Head of caudate nucleus (tissue), 42 donors: ENCODE measurements at regions of chr1 and their contacts with region 1.

Region 1: DNA sequence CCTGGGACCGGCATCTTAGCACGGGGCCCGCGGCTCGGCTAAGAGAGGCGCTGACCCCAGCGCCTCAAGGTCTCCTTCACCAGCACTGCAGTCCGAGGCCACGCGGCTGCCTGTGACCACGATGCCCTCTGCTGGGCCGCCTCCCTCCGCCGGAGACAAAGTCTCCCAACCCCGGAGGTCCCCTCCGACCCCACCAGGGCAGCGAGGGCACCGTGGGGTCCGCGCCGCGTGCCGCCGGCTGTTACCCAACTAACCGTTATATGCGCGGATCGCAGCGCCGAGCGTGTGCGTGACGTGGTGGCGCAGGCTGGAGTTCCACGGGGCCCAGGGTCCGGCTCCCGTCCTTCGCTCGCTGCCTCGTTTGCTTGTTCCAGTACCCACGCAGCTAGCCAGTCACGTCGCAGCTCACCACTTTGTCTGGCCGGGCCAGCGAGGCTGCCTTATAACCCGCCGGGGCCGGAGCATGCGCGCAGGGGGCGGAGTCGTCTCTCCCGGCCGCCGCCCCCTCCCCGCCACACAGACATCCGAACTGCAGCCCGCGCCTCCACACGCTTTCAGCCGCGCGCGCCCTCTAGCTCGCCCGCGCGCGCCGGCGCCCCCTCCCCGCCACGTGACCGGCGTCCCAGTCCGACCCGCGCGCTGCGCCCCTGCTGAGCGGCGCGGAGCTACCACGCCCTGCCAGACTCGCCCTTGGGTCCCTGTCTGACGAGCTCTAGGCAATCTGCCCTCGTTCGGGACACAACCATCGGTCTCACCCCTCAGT is at the start of gene SLC16A1:
- DNase-seq: peak; percentile 89 to 98 (median 96)

Region 2: DNA sequence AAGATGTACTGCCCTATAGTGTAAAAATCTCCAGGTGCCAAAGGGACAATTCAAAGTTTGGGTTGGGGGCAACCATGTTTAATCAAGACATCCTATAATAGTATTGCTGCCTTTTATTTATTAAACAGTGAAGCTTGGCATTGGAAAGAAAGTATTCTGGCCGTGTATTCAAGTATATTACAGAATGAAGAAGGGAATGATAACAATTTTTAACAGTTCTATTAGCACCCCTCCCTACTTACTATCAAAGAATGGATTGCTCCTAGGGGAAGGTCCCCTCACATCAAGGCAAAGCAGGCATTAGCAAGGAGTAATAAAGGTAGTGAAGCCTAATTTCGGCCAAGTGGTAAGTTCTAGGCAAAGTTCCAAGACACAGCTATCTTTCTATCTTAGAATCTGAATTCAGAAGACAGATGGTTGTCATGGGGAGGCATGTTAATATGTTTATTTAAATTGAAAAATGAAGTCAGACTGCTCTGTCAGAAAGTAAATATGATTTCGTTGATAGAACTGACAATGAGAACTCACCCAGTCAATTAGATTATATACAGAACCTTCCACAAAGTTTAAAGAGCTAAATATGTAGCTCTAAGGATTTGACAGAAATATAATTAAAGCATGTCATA is 361.6 kb before region 1 on chr1:
- intact Hi-C with region 1: no loop called
- DNase-seq: no peak

Region 3: DNA sequence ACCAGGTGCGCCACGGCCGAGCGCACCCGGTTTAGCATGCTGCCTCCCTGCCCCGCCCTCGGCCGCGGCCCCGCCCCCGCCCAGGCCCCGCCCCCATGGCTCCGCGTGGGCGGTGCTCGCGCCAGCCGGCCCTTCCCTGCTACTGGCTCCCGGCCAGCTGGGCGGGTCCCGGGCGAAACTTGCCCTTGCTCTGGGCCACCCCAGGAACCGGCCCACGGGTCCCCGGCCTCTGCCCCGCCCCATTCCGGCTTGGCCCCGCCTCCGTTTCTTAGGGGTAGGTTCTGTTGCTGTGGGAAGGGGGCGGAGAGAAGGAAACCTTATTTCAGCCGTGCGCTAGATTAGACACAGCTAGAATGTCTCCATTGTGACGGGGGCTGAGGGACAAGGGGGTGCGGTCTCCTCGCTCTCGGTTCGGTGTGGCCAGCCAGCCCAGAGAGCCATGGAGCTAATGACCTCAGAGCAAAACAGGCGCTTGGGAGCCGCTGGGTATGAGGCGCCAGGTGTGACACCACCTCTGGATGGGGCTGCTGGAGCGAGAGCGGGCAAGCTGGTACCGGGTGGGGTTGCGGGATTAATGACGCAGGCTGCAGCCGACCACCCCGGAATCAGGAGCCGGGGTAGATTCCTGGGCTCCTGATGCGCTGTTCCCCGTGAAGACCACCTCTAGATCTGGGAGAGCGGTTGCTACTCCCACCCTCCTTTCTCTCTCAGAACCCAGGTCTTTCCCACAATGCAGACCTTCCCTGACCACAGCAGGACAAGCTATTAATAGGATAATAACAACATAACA is 240.5 kb before region 1 on chr1 and contains the start of gene PPM1J:
- intact Hi-C with region 1: loop called (anchors 10 kb)
- DNase-seq: peak; percentile 68 to 94 (median 86)

Region 4: GRCh38 chr1:112803906-112804762 is 151.8 kb before region 1 on chr1:
- intact Hi-C with region 1: loop called (anchors 10 kb)
- DNase-seq: peak; percentile 68 to 90 (median 81)

Region 5: GRCh38 chr1:112882271-112882744 is 73.7 kb before region 1 on chr1:
- intact Hi-C with region 1: loop called (anchors 2 kb)
- DNase-seq: no peak

Region 6: DNA sequence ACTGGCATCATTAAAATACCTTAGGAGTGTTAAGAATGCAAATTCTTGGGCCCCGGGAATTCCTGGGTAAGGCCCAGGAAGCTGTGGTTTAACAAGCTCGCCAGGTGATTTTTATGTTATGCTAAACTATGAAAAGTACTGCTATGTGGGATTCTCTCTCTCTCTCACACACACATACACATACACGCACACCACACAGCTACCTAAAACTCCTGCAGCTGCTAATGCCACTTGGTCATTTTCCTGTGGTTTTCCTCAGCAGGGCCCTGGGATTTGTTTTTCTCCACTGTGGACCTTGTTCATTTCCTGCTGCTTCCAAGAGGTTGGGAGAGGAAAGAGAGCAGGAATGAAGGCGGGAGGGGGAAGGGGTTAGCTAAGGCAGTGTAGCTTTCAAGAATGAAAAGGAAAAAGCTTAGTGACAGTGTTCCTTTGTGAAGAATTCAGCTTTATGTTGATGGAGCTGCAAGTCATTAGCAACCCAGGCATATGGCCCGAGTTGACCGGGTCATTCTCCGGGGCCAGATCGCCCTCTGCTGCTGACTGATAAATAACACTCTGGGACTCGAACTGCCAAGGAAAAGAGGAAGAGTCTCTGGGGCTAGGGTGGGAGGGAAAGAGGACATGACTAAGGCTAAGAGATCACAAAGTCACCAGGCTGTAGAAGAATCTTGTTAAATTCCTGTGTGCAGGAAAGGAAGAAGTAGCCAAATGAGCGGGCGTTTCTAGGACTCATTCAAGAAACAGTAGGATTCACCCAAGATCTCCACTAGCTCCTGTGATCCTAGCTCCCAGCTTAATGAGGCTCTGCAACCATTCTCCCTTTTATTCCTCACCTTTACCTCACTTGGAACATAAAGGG is 86.6 kb after region 1 on chr1:
- intact Hi-C with region 1: loop called (anchors 2 kb)
- DNase-seq: peak; percentile 36 to 94 (median 83)